Transverse colon (tissue), 4 donors: ENCODE measurements at regions of chr2 and their contacts with region 1.

Region 1: DNA sequence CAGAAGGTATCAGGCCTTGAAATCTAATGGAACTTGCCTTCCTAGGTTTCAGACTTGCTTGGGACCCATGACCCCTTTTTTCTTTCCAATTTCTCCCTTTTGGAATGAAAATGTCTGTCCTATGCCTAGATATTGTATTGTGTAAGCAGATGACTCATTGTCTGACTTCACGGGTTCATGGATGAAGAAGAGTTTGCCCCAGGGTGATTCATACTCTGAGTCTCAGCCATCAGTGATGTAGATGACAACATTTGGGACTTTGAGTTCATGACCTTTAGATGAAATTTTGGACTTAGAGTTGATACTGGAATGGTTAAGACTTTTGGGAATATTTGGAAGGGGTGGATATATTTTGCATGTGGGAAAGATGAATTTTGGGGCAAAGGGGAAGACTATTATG is 11.2 kb upstream of the SCYGR5 start:
- DNase-seq: no peak
- H3K4me3 ChIP-seq: no peak overlapping the region
- H3K27ac ChIP-seq: no peak overlapping the region
- H3K4me1 ChIP-seq: peaks cover 0 to 10% (median 3%) of the 10 kb centered on the region in 4 donors
- H3K27me3 ChIP-seq: no peaks in the 10 kb centered on the region
- CTCF ChIP-seq: no peak
- EP300 ChIP-seq: no peak
- POLR2A ChIP-seq: no peak

Region 2: DNA sequence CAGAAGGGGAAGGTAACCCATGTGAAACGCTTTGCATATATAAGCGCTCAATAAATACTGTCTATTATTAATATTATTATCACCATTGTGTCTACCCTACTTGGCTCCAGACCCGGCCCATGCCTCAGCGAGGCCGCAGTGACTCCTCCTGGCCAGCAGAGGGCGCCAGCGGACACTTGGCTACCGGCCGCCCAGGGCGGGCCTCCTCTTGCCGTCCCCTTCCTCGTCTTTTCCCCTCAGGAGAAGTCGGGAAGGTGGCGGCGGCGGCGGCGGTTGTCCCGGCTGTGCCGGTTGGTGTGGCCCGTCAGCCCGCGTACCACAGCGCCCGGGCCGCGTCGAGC is 183.6 kb before region 1 on chr2 and contains the start of gene AGFG1:
- in situ Hi-C with region 1: no loop called
- intact Hi-C with region 1: loop called (anchors 5 kb)
- DNase-seq: peak; percentile 88
- H3K4me3 ChIP-seq: peak within 1 kb of the TSS; percentile 62 to 95 (median 86)
- H3K27ac ChIP-seq: peak within 1 kb of the TSS; percentile 87 to 94 (median 92)
- H3K4me1 ChIP-seq: peaks cover 14 to 31% (median 19%) of the 10 kb centered on the region in 4 donors
- H3K27me3 ChIP-seq: no peaks in the 10 kb centered on the region
- CTCF ChIP-seq: peak; percentile 96 to 100 (median 99)
- EP300 ChIP-seq: no peak
- POLR2A ChIP-seq: peak; percentile 59
- total RNA-seq, gene AGFG1: 15.5 to 76.3 (median 32.9) TPM

Region 3: GRCh38 chr2:227862227-227862740 is 206.8 kb after region 1 on chr2:
- in situ Hi-C with region 1: loop called in 3 of 4 experiments (anchors 10 to 25 kb)
- intact Hi-C with region 1: no loop called
- DNase-seq: peak; percentile 36
- H3K4me3 ChIP-seq: no peak overlapping the region
- H3K27ac ChIP-seq: no peak overlapping the region
- H3K4me1 ChIP-seq: no peaks in the 10 kb centered on the region
- H3K27me3 ChIP-seq: no peaks in the 10 kb centered on the region
- CTCF ChIP-seq: peak; percentile 64 to 83 (median 67)
- EP300 ChIP-seq: no peak
- POLR2A ChIP-seq: no peak